ENCODE measurements at regions of chr21 and their contacts with region 1.

Region 1: GRCh38 chr21:42820616-42821474 is 58.5 kb downstream of the WDR4 start:
- DNase-seq: no peak
- H3K4me3 ChIP-seq: no peak overlapping the region
- H3K27ac ChIP-seq: no peak overlapping the region
- H3K4me1 ChIP-seq: no peaks in the 10 kb centered on the region
- H3K27me3 ChIP-seq: peaks cover 0 to 16% of the 10 kb centered on the region in 2 donors
- CTCF ChIP-seq: no peak

Region 2: DNA sequence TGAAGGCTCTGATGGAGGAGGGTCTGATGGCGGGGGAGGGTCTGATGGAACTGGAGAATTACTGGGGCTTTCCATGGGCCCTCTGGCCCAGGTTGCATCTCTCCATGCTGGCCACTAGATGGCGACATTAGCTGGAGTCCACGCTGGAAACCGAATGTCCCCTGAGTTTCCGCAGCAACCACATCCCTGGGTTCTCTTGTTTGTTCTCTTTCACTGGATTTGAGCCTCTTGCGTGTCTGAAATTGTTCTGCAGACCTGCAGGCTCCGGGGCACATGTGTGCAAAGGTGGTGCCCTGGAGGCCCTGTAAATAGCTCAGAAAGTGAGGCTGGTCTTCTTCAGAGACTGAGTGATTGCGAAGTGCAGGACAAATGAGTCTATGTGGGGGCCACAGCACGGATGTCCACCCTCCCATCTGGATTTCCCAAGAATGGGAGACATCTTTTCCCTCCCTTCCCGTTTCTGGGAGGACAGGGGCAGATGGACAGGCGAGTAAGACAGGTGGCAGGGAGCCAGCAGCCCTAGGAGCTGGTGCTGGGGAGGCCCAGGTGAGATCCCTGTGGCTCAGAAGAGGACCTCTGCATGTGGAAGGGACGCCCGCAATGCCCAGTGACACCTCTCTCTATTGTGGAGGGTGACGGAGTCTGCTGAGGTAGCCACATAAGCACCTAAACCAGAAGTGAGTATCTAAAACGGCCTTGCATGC is 675.1 kb before region 1 on chr21:
- intact Hi-C with region 1: loop called (anchors 5 kb)
- DNase-seq: peak in 1 of 2 donors; percentile 68
- H3K4me3 ChIP-seq: no peak overlapping the region
- H3K27ac ChIP-seq: no peak overlapping the region
- H3K4me1 ChIP-seq: peaks cover 0 to 3% (median 0%) of the 10 kb centered on the region in 4 donors
- H3K27me3 ChIP-seq: peaks cover 0 to 28% of the 10 kb centered on the region in 2 donors
- CTCF ChIP-seq: peak; percentile 86 to 92

Region 3: DNA sequence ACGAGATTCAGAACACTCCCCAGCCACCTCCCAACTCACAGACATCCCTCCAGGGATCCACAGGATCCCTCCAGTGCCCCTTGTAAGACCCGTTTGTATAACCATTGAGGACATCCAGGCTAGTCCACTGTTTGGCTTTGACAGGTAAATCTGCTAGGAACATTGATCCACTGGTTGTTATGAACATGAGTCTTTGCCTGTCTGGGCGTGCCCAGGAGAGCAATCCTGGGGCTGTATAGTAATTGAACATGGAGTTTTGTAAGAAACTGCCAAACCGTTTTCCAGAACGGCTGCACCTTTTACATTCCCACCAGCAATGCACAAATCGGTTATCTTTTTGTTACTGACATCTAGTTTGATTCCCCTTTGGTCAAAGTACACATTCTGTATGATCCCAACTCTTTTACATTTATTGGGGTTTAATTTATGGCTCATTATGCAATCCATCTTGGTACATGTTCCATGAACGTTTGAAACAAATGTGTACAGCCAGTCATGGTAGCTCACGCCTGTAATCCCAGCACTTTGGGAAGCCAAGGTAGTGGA is 30.3 kb before region 1 on chr21:
- intact Hi-C with region 1: no loop called
- DNase-seq: no peak
- H3K4me3 ChIP-seq: no peak overlapping the region
- H3K27ac ChIP-seq: no peak overlapping the region
- H3K4me1 ChIP-seq: no peaks in the 10 kb centered on the region
- H3K27me3 ChIP-seq: peaks cover 0 to 48% of the 10 kb centered on the region in 2 donors
- CTCF ChIP-seq: no peak